ENCODE measurements at regions of chr9 and their contacts with region 1.

Region 1: DNA sequence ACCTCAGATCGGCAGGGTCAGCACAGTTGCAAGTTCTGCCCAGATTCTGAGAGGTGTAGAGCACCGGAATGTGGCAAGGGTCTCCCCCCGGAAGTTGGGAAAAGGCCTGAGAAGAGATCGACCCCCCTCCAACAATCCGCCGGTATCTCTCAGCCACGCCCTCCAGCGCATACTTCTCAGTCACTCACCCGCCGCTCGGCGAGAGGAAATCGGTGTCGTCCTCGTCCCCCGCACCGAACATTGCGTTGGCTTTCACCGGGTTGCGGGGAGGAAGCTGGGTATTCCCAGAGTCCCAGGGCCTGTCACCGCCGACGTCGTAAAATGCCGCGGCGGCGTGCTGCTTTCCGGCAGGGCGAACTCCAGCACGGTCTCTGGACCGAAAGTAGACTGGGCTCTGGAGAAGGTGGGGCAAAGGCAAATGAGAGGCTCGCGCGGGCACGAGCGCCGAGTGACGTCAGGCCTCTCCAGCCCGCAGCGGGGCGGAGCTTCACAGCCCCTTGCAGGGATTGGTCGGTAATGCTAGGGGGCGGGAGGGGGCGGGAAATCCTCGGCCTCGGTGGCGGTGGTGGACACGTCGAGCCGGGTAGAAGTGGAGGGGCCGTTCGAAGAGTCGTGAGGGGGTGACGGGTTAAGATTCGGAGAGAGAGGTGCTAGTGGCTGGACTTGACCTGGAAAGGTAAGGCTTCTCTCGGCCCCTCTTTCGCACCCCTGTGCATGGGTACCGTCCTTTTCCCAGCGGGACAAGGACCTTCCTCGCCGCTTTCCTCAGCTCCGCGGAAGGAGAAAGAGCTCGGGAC is at the starts of genes FKBP15 and SLC31A1:
- DNase-seq: peak; percentile 98
- H3K4me3 Mint-ChIP-seq: peak within 1 kb of the TSS; percentile 95
- H3K27ac Mint-ChIP-seq: peak within 1 kb of the TSS; percentile 91
- H3K4me1 Mint-ChIP-seq: peaks cover 38% of the 10 kb centered on the region
- H3K27me3 Mint-ChIP-seq: no peaks in the 10 kb centered on the region
- total RNA-seq, gene FKBP15: 14.7 to 15.8 TPM
- total RNA-seq, gene SLC31A1: 8.1 to 8.2 TPM

Region 2: DNA sequence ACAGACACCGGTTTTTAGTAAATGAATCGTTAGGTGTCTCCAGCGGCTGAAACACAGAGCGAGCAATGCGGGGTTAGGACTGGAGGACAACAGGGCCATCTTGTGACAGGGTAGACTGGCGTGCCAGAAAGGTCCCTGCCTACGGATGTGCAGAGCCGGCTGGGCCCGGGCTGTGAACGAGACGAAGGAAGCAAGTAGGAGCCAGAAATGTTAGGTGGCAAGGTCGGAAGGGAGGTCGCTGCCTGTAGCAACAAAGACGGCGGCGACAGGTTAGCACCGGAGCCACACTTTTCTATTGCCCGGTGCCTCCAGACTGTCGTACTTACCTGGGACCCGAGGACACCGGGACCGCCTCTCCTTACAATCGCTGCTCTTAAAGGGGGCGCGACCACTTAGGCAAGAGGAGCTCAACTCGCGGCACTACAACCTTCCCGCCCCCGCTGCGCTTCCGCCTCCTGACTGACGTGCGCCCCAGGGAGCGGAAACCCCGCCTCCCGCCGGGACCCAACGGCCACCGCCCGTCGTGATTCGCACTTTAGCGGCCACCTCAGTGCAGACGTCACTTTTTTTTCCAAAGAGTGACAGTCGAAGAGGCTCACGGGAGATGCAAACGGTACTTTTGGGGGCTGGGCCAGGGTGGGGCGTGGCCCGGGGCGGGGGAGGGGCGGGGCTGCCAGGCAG is 503.4 kb before region 1 on chr9 and contains the start of gene INIP:
- CTCF ChIA-PET with region 1: no interaction called
- intact Hi-C with region 1: loop called (anchors 1 kb)
- DNase-seq: peak; percentile 97
- H3K4me3 Mint-ChIP-seq: peak within 1 kb of the TSS; percentile 97
- H3K27ac Mint-ChIP-seq: peak within 1 kb of the TSS; percentile 94
- H3K4me1 Mint-ChIP-seq: peaks cover 23% of the 10 kb centered on the region
- H3K27me3 Mint-ChIP-seq: no peaks in the 10 kb centered on the region
- total RNA-seq, gene INIP: 31.1 to 33.4 TPM

Region 3: GRCh38 chr9:112774006-112774996 is 446.9 kb before region 1 on chr9:
- CTCF ChIA-PET with region 1: no interaction called
- intact Hi-C with region 1: loop called (anchors 5 kb)
- DNase-seq: no peak
- H3K4me3 Mint-ChIP-seq: no peak overlapping the region
- H3K27ac Mint-ChIP-seq: no peak overlapping the region
- H3K4me1 Mint-ChIP-seq: peaks cover 35% of the 10 kb centered on the region
- H3K27me3 Mint-ChIP-seq: no peaks in the 10 kb centered on the region

Region 4: DNA sequence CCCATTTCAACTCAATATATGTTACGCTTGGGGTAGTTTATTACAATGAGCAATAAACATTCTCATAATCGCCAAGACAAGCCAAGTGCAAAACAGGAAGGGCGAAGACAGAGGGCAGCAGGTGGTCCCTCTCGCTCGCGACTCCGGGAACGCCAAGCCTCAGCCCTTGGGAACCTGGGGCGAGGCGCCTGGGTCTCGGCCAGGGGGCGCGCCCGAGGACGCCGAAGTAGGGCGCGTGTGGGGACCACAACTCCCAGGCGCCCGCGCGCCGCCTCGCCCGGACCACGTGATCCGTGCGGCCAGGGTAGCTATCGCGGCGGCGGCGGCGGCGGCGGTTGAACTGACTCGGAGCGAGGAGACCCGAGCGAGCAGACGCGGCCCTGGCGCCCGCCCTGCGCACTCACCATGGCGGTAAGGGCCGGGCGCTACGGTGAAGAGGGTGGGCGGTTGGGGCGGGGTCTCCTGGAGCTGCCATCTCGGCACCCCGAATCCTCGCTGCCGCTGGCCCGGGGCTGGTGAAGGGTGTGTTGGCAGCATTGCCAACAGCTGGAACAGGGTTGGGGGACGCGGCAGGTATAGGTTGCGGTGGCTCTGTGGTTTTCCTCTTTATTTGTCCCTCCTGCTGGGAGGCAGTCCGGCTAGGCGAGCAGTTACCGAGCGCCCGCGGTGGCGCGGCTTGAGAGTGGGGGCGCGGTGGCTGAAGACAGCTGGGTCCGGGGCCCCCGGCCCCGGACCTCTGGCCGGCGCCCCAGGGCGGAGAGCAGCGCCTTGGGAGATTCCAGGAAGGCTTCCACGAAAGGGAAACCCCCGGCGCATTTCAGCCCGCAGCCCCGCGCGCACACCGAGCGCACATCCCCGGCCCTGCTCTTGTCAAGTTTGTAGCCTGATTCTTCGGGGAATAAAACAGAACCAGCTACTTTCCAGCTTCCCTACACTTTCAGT is 70.3 kb before region 1 on chr9 and contains the start of gene SLC31A2:
- CTCF ChIA-PET with region 1: interaction called, 4 read pairs
- intact Hi-C with region 1: loop called (anchors 1 kb)
- DNase-seq: peak; percentile 87
- H3K4me3 Mint-ChIP-seq: peak within 1 kb of the TSS; percentile 71
- H3K27ac Mint-ChIP-seq: no peak within 1 kb of the TSS
- H3K4me1 Mint-ChIP-seq: peaks cover 23% of the 10 kb centered on the region
- H3K27me3 Mint-ChIP-seq: no peaks in the 10 kb centered on the region
- total RNA-seq, gene SLC31A2: 1.2 to 1.7 TPM

Region 5: GRCh38 chr9:113340017-113340699 is 119.0 kb after region 1 on chr9 and contains the start of gene WDR31:
- CTCF ChIA-PET with region 1: no interaction called
- intact Hi-C with region 1: loop called (anchors 2 kb)
- DNase-seq: peak; percentile 85
- H3K4me3 Mint-ChIP-seq: peak within 1 kb of the TSS; percentile 84
- H3K27ac Mint-ChIP-seq: peak within 1 kb of the TSS; percentile 55
- H3K4me1 Mint-ChIP-seq: peaks cover 35% of the 10 kb centered on the region
- H3K27me3 Mint-ChIP-seq: peaks cover 4% of the 10 kb centered on the region
- total RNA-seq, gene WDR31: 0.81 to 0.88 TPM

Region 6: GRCh38 chr9:113401027-113401792 is 180.0 kb after region 1 on chr9 and contains the start of gene ALAD:
- CTCF ChIA-PET with region 1: no interaction called
- intact Hi-C with region 1: loop called (anchors 2 kb)
- DNase-seq: peak; percentile 99
- H3K4me3 Mint-ChIP-seq: peak within 1 kb of the TSS; percentile 93
- H3K27ac Mint-ChIP-seq: no peak within 1 kb of the TSS
- H3K4me1 Mint-ChIP-seq: peaks cover 20% of the 10 kb centered on the region
- H3K27me3 Mint-ChIP-seq: no peaks in the 10 kb centered on the region
- total RNA-seq, gene ALAD: 16.1 to 17.7 TPM

Region 7: GRCh38 chr9:113511856-113512761 is 290.9 kb after region 1 on chr9:
- CTCF ChIA-PET with region 1: no interaction called
- intact Hi-C with region 1: loop called (anchors 2 kb)
- DNase-seq: peak; percentile 82
- H3K4me3 Mint-ChIP-seq: peak overlapping the region; percentile 41
- H3K27ac Mint-ChIP-seq: peak overlapping the region; percentile 85
- H3K4me1 Mint-ChIP-seq: peaks cover 50% of the 10 kb centered on the region
- H3K27me3 Mint-ChIP-seq: peaks cover 2% of the 10 kb centered on the region